Activated T-helper 1 cell treated with anti-CD3 and anti-CD28 coated beads, Interleukin-12 subunit alpha, Interleukin-12 subunit beta, Interleukin-2, Interleukin-4 antibody, amounts not matched to agents 30 ng/mL and 10 ng/mL and 1 ng/mL, durations not matched to agents 14 hours and 24 hours and 36 hours (primary cell): ENCODE measurements at regions of chr1 and their contacts with region 1.

Region 1: GRCh38 chr1:206106328-206107167 is 10.6 kb downstream of the AVPR1B start:
- DNase-seq: peak; percentile 66
- H3K4me3 Mint-ChIP-seq: no peak overlapping the region
- H3K27ac Mint-ChIP-seq: no peak overlapping the region
- H3K4me1 Mint-ChIP-seq: no peaks in the 10 kb centered on the region
- H3K27me3 Mint-ChIP-seq: peaks cover 28% of the 10 kb centered on the region

Region 2: DNA sequence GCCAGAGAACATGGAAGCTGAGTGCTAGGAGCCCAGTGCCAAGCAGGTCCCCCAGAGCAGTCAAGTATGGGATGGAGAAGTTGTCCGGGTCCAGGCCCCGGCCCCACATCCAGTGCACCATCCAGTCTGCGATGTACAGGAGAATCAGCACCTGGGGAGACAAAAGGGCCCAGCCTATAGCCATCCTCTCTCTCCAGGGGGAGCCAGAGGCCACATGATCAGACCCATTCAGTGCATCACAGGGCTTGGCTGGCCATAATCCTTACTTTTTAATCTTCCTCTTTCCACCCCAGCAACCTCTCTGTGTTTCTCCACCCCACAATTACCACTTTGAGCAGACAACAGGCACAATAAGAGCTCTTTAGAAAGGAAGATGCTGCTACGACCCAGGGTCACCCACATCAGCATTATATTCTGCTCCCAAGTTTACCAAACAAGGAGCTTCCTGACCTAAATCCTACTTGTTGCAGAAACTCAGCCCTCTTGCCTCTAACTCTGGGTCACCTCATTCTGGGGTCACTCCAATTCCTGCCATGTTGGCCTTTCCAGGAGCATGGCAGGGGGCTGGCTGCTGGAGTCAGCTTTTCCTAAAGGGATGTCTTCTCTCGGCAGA is 314.9 kb before region 1 on chr1:
- intact Hi-C with region 1: loop called (anchors 1 kb)
- DNase-seq: peak; percentile 36
- H3K4me3 Mint-ChIP-seq: no peak overlapping the region
- H3K27ac Mint-ChIP-seq: no peak overlapping the region
- H3K4me1 Mint-ChIP-seq: peaks cover 11% of the 10 kb centered on the region
- H3K27me3 Mint-ChIP-seq: no peaks in the 10 kb centered on the region

Region 3: GRCh38 chr1:205919026-205919746 is 187.4 kb before region 1 on chr1:
- intact Hi-C with region 1: loop called (anchors 1 kb)
- DNase-seq: peak; percentile 56
- H3K4me3 Mint-ChIP-seq: no peak overlapping the region
- H3K27ac Mint-ChIP-seq: no peak overlapping the region
- H3K4me1 Mint-ChIP-seq: no peaks in the 10 kb centered on the region
- H3K27me3 Mint-ChIP-seq: peaks cover 14% of the 10 kb centered on the region

Region 4: DNA sequence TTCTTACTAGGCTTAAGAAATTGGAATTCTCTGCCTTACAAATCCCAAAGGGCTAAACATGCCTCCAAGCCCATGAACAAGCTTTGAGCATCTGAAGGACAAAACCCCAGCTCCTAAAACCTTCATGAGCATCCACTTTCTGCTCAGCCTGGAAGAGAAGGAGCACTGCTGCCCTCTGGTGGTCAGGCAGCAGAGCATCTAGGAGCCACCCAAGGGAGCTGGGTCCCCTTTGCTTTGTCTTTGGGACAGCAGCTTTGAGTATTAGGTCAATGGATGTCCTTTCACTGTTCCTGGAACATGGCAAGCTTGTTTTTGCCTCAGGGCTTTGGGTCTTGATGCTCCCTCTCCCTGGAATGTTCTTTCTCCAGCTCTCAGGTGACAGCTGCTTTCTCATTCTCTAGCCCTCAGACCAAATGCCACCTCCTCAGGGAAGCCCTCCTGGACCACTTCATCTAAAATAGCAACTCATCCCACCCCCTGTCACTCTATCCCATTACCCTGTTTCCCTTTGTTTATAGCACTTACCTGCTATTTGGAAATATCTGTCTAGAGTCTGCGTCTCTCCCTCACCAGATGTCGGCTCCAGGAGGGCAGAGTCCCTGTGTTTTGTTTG is 129.0 kb before region 1 on chr1:
- intact Hi-C with region 1: loop called (anchors 2 kb)
- DNase-seq: peak; percentile 63
- H3K4me3 Mint-ChIP-seq: no peak overlapping the region
- H3K27ac Mint-ChIP-seq: no peak overlapping the region
- H3K4me1 Mint-ChIP-seq: no peaks in the 10 kb centered on the region
- H3K27me3 Mint-ChIP-seq: no peaks in the 10 kb centered on the region

Region 5: DNA sequence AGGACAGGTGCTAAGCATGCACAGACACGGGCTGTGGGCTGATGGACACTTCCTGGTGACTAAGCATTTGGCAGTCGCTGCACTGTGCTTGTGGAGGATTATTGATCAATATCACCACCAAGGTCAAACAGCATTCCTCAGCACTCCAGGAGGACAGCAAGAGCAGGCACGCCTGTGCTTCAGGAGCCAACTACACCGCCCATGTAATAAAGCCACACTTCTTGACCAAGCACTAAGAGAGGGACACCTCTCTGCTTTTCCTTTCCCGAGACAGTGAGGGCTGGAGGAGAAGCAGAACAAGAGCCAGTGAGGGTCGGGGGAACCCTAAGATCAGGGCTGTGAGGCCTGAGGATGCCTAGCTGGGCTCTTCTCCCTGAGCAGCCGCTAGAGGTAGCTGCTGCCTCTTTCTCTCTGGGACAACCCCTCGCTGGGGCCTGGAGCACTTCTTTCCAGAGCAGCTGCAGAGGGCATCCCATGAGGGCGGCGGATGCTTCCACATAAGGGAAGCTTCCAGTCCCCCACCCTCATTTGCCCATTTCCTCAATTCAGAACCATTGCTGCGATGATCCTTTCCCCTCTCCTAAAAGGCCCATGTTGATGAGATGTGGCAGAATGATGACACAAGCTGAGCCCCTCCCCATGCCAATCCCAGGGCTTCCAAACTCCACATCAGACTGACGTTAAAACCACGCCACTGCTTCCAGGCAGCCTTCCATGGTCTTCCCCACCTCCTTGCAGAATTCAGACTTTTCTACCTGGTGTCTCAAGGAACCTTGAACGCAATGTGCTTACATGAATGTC is 122.4 kb before region 1 on chr1:
- intact Hi-C with region 1: loop called (anchors 1 kb)
- DNase-seq: no peak
- H3K4me3 Mint-ChIP-seq: no peak overlapping the region
- H3K27ac Mint-ChIP-seq: no peak overlapping the region
- H3K4me1 Mint-ChIP-seq: no peaks in the 10 kb centered on the region
- H3K27me3 Mint-ChIP-seq: peaks cover 1% of the 10 kb centered on the region

Region 6: DNA sequence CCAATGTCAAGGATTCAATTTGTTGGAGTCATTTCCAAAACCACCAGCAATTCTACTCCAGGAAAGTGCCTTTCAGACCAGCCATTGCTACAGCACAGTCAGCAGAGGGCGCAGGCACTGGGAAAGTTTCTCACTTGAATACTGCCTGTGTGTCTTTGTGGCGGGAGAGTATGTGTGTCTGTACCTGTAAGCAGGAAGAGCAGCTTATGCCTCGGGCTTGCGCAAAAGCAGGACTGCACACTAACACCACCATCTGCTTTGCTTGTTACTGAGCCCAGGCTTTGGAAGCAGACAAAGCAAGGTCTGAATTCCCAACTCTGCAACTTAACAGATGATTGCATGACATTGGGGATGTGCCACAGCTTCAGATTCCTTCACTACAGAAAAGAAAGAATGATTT is 75.8 kb before region 1 on chr1:
- intact Hi-C with region 1: loop called (anchors 1 kb)
- DNase-seq: peak; percentile 69
- H3K4me3 Mint-ChIP-seq: no peak overlapping the region
- H3K27ac Mint-ChIP-seq: no peak overlapping the region
- H3K4me1 Mint-ChIP-seq: peaks cover 17% of the 10 kb centered on the region
- H3K27me3 Mint-ChIP-seq: peaks cover 59% of the 10 kb centered on the region

Region 7: GRCh38 chr1:206074839-206075238 is 31.7 kb before region 1 on chr1:
- intact Hi-C with region 1: loop called (anchors 5 kb)
- DNase-seq: no peak
- H3K4me3 Mint-ChIP-seq: no peak overlapping the region
- H3K27ac Mint-ChIP-seq: no peak overlapping the region
- H3K4me1 Mint-ChIP-seq: peaks cover 4% of the 10 kb centered on the region
- H3K27me3 Mint-ChIP-seq: peaks cover 42% of the 10 kb centered on the region

Region 8: DNA sequence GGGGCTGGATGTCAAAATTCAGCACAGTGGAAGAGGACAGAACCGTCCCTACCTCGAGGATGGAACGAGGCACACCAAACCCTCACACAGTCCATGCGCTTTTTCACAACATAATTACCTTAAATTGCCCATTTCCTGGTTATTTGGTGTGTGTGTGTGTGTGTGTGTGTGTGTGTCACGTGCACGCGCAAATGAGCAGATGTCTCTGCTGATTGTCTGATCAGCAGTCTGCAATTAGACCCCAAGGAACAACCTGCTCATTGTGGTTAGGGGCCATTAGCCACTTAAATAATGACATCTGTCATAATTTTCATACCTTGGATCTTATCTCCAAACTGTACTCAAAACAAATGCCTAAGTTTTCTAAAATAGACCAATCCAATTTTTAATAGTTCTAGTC is 12.5 kb before region 1 on chr1:
- intact Hi-C with region 1: no loop called
- DNase-seq: no peak
- H3K4me3 Mint-ChIP-seq: no peak overlapping the region
- H3K27ac Mint-ChIP-seq: no peak overlapping the region
- H3K4me1 Mint-ChIP-seq: no peaks in the 10 kb centered on the region
- H3K27me3 Mint-ChIP-seq: peaks cover 43% of the 10 kb centered on the region